ENCODE measurements at regions of chrX and their contacts with region 1.

Region 1: GRCh38 chrX:8988446-8988845 is 45.5 kb downstream of the FAM9B start:
- DNase-seq: peak in 2 of 5 donors; percentile 7 to 38
- H3K4me3 ChIP-seq: no peak overlapping the region
- H3K4me3 Mint-ChIP-seq: peak overlapping the region in 1 of 8 donors; percentile 56
- H3K27ac ChIP-seq: no peak overlapping the region
- H3K27ac Mint-ChIP-seq: peak overlapping the region; percentile 89 to 95 (median 93)
- H3K4me1 ChIP-seq: peaks cover 24% of the 10 kb centered on the region
- H3K4me1 Mint-ChIP-seq: peaks cover 12 to 30% (median 17%) of the 10 kb centered on the region in 4 donors
- H3K27me3 ChIP-seq: no peaks in the 10 kb centered on the region
- H3K27me3 Mint-ChIP-seq: no peaks in the 10 kb centered on the region

Region 2: GRCh38 chrX:9163214-9163681 is 174.8 kb after region 1 on chrX:
- CTCF ChIA-PET with region 1: no interaction called
- POLR2A ChIA-PET with region 1: interaction called, 3 read pairs
- intact Hi-C with region 1: loop called (anchors 10 kb)
- DNase-seq: no peak
- H3K4me3 ChIP-seq: no peak overlapping the region
- H3K4me3 Mint-ChIP-seq: peak overlapping the region in 1 of 8 donors; percentile 7
- H3K27ac ChIP-seq: no peak overlapping the region
- H3K27ac Mint-ChIP-seq: peak overlapping the region in 1 of 7 donors; percentile 53
- H3K4me1 ChIP-seq: peaks cover 24% of the 10 kb centered on the region
- H3K4me1 Mint-ChIP-seq: peaks cover 16 to 35% (median 24%) of the 10 kb centered on the region in 4 donors
- H3K27me3 ChIP-seq: no peaks in the 10 kb centered on the region
- H3K27me3 Mint-ChIP-seq: no peaks in the 10 kb centered on the region

Region 3: DNA sequence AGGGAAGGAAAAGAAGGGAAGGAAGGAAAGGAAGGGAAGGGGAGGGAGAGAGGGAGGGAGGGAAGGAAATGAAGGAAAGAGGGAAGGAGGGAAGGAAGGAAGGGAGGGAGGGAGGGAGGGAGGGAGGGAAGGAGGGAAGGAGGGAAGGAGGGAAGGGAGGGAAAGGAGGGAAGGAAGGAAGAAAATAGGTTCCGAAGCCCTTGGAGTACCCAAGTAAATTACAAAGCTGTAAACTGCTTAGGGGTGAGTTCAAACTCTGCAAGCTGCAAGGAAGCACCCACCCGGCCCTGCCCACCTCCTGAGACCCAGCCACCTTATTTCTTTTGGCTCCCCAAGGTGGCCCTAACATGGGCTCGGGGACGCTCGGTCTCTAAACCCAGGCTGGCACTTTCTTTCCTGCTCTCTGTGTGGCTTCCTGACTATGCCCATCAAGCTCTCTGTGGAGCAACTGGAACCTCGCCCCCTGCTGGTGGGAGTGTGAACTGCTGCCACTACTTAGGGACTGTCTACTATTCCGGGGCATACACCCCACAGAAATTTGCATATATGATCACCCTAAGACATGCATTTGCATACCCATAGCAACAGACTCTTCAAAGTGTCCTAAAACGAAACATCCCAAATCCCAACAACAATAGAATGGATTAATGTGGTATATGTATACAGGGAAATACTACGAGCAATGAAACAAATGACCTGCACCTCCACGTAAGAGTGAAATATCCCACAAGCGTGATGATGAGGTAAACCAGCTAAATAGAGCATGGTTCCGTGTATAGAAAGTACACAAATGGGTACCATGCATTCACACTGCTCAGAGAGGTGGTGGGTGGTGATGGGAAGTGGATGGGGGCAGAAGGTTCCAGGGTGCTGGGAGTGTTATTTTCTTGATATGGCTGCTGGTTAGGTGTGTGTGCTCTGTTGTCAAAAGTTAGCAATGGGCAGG is 324.7 kb after region 1 on chrX:
- CTCF ChIA-PET with region 1: interaction called, 3 read pairs
- POLR2A ChIA-PET with region 1: no interaction called
- intact Hi-C with region 1: loop called (anchors 1 kb)
- DNase-seq: peak; percentile 60 to 72 (median 67)
- H3K4me3 ChIP-seq: no peak overlapping the region
- H3K4me3 Mint-ChIP-seq: peak overlapping the region in 4 of 8 donors; percentile 62 to 77 (median 66)
- H3K27ac ChIP-seq: no peak overlapping the region
- H3K27ac Mint-ChIP-seq: peak overlapping the region in 3 of 7 donors; percentile 9 to 53 (median 23)
- H3K4me1 ChIP-seq: no peaks in the 10 kb centered on the region
- H3K4me1 Mint-ChIP-seq: peaks cover 11 to 16% (median 12%) of the 10 kb centered on the region in 4 donors
- H3K27me3 ChIP-seq: no peaks in the 10 kb centered on the region
- H3K27me3 Mint-ChIP-seq: no peaks in the 10 kb centered on the region

Measured in CD4-positive, alpha-beta memory T cell (primary cell).